ENCODE measurements at regions of chr4 and their contacts with region 1.

Region 1: DNA sequence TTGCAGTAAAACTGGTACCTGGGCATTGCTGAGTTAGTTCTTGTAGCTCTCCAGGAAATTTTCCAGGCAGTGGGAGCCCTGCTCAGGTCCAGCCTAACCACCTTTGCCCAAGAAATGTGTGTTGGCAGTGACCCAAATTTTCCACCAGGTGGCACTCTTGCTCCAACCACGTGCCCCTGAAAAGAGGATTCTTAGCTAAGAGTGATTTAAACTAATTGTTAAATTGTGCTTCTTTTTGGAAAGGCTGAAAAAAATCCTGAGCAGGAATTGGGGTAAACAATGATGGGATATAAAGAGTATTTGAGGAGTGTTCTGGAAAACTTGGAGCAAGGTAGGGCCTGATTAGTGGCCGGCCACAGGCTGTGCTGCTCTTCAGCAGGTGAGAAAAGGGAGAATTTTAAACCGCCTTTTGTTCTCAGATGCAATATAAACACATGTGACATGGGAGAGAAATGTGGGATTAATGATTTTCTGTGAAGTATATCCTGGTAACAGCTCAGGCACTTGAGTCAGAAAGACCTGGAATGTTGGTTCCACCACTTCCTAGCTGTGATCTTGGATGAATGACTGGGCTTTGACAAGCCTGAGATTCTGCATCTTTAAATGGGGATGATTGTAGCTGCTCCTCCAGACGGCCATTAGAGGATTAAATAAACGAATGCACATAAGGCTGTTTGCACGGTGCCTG is 219.6 kb downstream of the PTTG2 start:
- DNase-seq: peak; percentile 58 to 86 (median 76)
- ATAC-seq: peak; percentile 65
- H3K4me3 ChIP-seq: no peak overlapping the region
- H3K4me3 Mint-ChIP-seq: no peak overlapping the region
- H3K27ac ChIP-seq: no peak overlapping the region
- H3K27ac Mint-ChIP-seq: no peak overlapping the region
- H3K4me1 ChIP-seq: peaks cover 19% of the 10 kb centered on the region
- H3K4me1 Mint-ChIP-seq: peaks cover 37% of the 10 kb centered on the region
- H3K27me3 ChIP-seq: no peaks in the 10 kb centered on the region
- H3K27me3 Mint-ChIP-seq: no peaks in the 10 kb centered on the region
- CTCF ChIP-seq: peak; percentile 97

Region 2: GRCh38 chr4:38062088-38062893 is 117.5 kb before region 1 on chr4:
- CTCF ChIA-PET with region 1: interaction called, 28 read pairs
- POLR2A ChIA-PET with region 1: no interaction called
- intact Hi-C with region 1: loop called (anchors 1 kb)
- DNase-seq: peak; percentile 24 to 80 (median 67)
- ATAC-seq: peak; percentile 59
- H3K4me3 ChIP-seq: peak overlapping the region in 1 of 2 experiments; percentile 13
- H3K4me3 Mint-ChIP-seq: peak overlapping the region; percentile 83
- H3K27ac ChIP-seq: no peak overlapping the region
- H3K27ac Mint-ChIP-seq: peak overlapping the region; percentile 11
- H3K4me1 ChIP-seq: no peaks in the 10 kb centered on the region
- H3K4me1 Mint-ChIP-seq: peaks cover 12% of the 10 kb centered on the region
- H3K27me3 ChIP-seq: no peaks in the 10 kb centered on the region
- H3K27me3 Mint-ChIP-seq: no peaks in the 10 kb centered on the region
- CTCF ChIP-seq: peak; percentile 97

Region 3: GRCh38 chr4:38145741-38146140 is 34.1 kb before region 1 on chr4:
- CTCF ChIA-PET with region 1: interaction called, 11 read pairs
- POLR2A ChIA-PET with region 1: no interaction called
- intact Hi-C with region 1: no loop called
- DNase-seq: no peak
- ATAC-seq: no peak
- H3K4me3 ChIP-seq: no peak overlapping the region
- H3K4me3 Mint-ChIP-seq: no peak overlapping the region
- H3K27ac ChIP-seq: no peak overlapping the region
- H3K27ac Mint-ChIP-seq: no peak overlapping the region
- H3K4me1 ChIP-seq: no peaks in the 10 kb centered on the region
- H3K4me1 Mint-ChIP-seq: no peaks in the 10 kb centered on the region
- H3K27me3 ChIP-seq: no peaks in the 10 kb centered on the region
- H3K27me3 Mint-ChIP-seq: no peaks in the 10 kb centered on the region
- CTCF ChIP-seq: no peak

Region 4: DNA sequence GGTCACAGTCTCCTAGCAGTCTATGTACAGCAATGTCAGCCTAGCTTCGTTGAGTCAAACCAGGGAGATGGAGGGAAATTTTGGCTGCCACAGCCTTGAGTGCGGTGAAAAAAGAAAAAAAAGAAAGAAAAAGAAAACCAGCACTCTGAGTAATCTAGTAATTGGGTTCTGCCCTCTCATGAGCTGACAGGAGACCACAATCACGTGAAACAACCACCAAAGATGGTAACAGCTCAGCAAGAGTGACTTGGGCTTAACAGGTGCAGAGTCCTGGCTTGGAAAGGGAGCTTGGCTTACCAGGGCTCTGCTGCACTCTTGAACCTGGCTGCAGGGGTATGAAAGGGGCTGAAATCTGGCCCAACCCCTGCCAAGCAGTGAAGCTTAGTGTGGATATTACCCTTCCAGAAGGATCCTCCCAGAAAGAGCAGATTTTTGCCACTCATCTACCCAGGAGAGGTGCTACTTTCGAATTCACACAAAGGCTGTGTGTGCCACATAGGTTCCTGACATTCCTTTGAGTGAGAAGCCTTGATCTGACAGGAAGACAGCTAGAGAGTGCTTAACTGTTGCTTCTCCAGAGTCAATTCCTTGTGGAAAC is 130.7 kb after region 1 on chr4:
- CTCF ChIA-PET with region 1: interaction called, 20 read pairs
- POLR2A ChIA-PET with region 1: no interaction called
- intact Hi-C with region 1: loop called in 1 of 2 experiments (anchors 2 kb)
- DNase-seq: peak; percentile 19 to 94 (median 65)
- ATAC-seq: peak; percentile 96
- H3K4me3 ChIP-seq: peak overlapping the region in 1 of 2 experiments; percentile 3
- H3K4me3 Mint-ChIP-seq: peak overlapping the region; percentile 54
- H3K27ac ChIP-seq: peak overlapping the region; percentile 6 to 47
- H3K27ac Mint-ChIP-seq: peak overlapping the region; percentile 90
- H3K4me1 ChIP-seq: peaks cover 38% of the 10 kb centered on the region
- H3K4me1 Mint-ChIP-seq: peaks cover 47% of the 10 kb centered on the region
- H3K27me3 ChIP-seq: no peaks in the 10 kb centered on the region
- H3K27me3 Mint-ChIP-seq: no peaks in the 10 kb centered on the region
- CTCF ChIP-seq: no peak

Region 5: DNA sequence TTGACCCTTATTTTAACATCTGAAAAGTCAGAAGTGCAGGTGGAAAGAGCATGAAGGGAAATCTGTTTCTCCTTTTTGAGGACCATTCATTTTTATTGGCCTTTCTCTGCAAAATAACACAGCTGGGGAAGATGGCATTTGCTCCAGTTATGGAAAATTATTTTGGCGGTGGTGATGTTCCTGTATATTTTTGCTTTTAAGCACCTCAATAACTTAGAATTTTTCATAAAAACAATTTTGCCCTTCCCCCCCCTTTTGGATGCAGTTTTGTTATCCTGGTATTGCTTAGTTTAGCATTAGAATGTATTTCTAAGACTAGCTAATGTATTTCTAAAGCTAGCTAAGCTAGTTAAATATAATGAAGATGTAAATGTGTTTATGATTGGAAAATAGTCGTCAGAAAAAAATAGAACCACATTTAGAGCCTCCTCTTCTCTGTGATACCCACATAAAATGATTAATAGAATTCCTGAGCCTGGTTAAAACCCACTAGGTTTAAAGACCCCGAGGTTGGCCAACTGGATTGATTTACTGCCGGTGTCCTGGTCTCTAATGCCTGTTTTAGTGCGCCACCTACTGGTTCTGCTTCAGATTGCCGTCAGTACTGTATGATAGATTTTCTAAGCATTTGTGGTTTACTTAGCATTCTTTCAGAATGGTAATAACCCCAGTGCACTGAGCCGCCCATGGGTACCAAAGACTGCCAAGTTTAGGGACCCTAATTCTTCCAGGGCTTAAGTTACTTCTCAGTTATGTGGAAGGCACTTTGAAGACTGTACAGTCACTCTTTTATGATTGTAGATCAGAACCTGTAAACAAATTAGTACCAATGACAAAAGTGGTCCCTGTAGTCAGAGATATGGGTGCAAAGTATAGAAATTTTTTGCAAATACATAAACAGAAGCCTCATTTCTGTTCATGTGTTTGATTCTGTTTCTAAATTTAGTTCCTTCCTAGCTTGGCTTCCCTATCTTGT is 495.6 kb after region 1 on chr4:
- CTCF ChIA-PET with region 1: interaction called, 120 read pairs
- POLR2A ChIA-PET with region 1: interaction called, 4 read pairs
- intact Hi-C with region 1: loop called (anchors 1 kb)
- DNase-seq: peak; percentile 73 to 91 (median 86)
- ATAC-seq: peak; percentile 59
- H3K4me3 ChIP-seq: peak overlapping the region in 1 of 2 experiments; percentile 15
- H3K4me3 Mint-ChIP-seq: peak overlapping the region; percentile 71
- H3K27ac ChIP-seq: peak overlapping the region in 1 of 2 experiments; percentile 66
- H3K27ac Mint-ChIP-seq: peak overlapping the region; percentile 93
- H3K4me1 ChIP-seq: peaks cover 79% of the 10 kb centered on the region
- H3K4me1 Mint-ChIP-seq: peaks cover 88% of the 10 kb centered on the region
- H3K27me3 ChIP-seq: no peaks in the 10 kb centered on the region
- H3K27me3 Mint-ChIP-seq: no peaks in the 10 kb centered on the region
- CTCF ChIP-seq: peak; percentile 92

Region 6: DNA sequence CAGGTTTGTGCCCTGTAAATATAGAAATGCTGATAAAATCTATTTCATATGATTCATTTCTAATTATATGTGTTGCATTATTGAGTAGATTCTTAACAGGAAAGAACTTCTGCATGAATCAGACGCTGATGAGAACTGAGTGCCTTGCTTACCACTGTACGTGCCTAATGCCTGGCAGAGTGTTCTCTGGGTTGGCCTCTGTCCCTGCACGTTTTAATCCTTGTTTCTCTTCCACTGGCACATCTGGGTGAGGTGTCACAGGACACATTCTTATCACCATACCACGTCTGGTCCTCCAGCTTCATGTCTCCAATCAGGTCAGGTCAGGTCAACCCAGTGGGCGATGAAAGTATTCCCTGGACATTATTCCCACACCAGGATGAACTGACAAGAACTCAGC is 537.8 kb after region 1 on chr4:
- CTCF ChIA-PET with region 1: interaction called, 16 read pairs
- POLR2A ChIA-PET with region 1: interaction called, 3 read pairs
- intact Hi-C with region 1: no loop called
- DNase-seq: no peak
- ATAC-seq: no peak
- H3K4me3 ChIP-seq: no peak overlapping the region
- H3K4me3 Mint-ChIP-seq: no peak overlapping the region
- H3K27ac ChIP-seq: no peak overlapping the region
- H3K27ac Mint-ChIP-seq: no peak overlapping the region
- H3K4me1 ChIP-seq: no peaks in the 10 kb centered on the region
- H3K4me1 Mint-ChIP-seq: no peaks in the 10 kb centered on the region
- H3K27me3 ChIP-seq: no peaks in the 10 kb centered on the region
- H3K27me3 Mint-ChIP-seq: no peaks in the 10 kb centered on the region
- CTCF ChIP-seq: no peak

Region 7: GRCh38 chr4:38759113-38759789 is 579.4 kb after region 1 on chr4:
- CTCF ChIA-PET with region 1: interaction called, 11 read pairs
- POLR2A ChIA-PET with region 1: no interaction called
- intact Hi-C with region 1: no loop called
- DNase-seq: peak; percentile 38 to 79 (median 52)
- ATAC-seq: peak; percentile 72
- H3K4me3 ChIP-seq: no peak overlapping the region
- H3K4me3 Mint-ChIP-seq: no peak overlapping the region
- H3K27ac ChIP-seq: no peak overlapping the region
- H3K27ac Mint-ChIP-seq: no peak overlapping the region
- H3K4me1 ChIP-seq: no peaks in the 10 kb centered on the region
- H3K4me1 Mint-ChIP-seq: peaks cover 19% of the 10 kb centered on the region
- H3K27me3 ChIP-seq: no peaks in the 10 kb centered on the region
- H3K27me3 Mint-ChIP-seq: no peaks in the 10 kb centered on the region
- CTCF ChIP-seq: peak; percentile 90